ENCODE measurements at regions of chr11 and their contacts with region 1.

Region 1: GRCh38 chr11:35594680-35595079 is 23.6 kb upstream of the FJX1 start:
- DNase-seq: no peak
- H3K4me3 ChIP-seq: no peak overlapping the region
- H3K27ac ChIP-seq: no peak overlapping the region
- H3K4me1 ChIP-seq: peaks cover 33% of the 10 kb centered on the region
- H3K27me3 ChIP-seq: no peaks in the 10 kb centered on the region
- CTCF ChIP-seq: no peak

Region 2: GRCh38 chr11:35524780-35525179 is 69.9 kb before region 1 on chr11:
- CTCF ChIA-PET with region 1: no interaction called
- dilution Hi-C with region 1: no loop called
- in situ Hi-C with region 1: no loop called
- intact Hi-C with region 1: loop called (anchors 1 kb)
- DNase-seq: peak; percentile 40
- H3K4me3 ChIP-seq: peak overlapping the region; percentile 34 to 67 (median 39)
- H3K27ac ChIP-seq: no peak overlapping the region
- H3K4me1 ChIP-seq: peaks cover 33% of the 10 kb centered on the region
- H3K27me3 ChIP-seq: no peaks in the 10 kb centered on the region
- CTCF ChIP-seq: no peak

Measured in mammary epithelial cell (primary cell).